ENCODE measurements at regions of chr16 and their contacts with region 1.

Region 1: DNA sequence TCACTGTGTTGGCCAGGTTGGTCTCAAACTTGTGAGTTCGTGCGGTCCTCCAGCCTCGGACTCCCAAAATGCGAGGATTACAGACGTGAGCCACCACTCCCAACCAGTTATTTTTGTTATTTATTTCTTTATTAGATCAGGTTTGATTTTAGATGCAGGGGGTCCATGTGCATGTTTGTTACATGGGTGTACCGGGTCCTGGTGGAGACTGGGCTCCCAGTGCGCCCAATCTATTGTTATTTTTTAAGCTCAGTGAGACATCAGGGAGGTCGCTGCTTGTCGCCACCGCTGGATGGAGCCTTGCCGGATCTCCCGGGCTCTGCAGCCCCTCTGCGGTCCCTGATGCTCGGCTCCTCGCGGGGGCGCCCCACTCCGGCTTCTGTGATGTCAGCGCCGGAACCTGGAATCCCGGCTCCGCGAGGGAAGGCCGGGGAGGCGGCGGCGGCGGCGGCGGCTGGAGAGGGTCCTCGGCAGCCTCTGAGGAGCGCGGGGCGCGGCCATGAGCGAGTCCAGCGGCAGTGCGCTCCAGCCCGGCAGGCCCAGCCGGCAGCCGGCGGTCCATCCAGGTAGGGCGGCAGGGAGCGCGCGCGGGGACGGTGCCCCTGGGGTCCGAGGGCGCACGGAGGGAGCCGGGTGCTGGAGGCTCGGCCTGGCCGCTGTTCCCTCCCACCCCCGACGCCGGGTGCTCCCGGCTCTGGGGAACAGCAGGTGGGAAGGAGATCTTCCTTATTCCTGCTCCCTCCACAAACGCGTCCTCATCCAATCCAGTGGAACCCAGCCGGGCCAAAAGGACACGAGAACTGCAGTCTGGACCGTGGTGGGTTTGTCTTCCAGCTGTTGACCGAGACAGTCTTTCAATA is at the start of gene TMC7:
- DNase-seq: peak; percentile 87
- ATAC-seq: peak; percentile 91
- H3K4me3 ChIP-seq: peak within 1 kb of the TSS; percentile 78
- H3K27ac ChIP-seq: peak within 1 kb of the TSS; percentile 94
- H3K4me1 ChIP-seq: peaks cover 19% of the 10 kb centered on the region
- H3K27me3 ChIP-seq: no peaks in the 10 kb centered on the region
- CTCF ChIP-seq: peak; percentile 85
- total RNA-seq, gene TMC7: 5.3 and 6.9 TPM in 2 replicates

Region 2: GRCh38 chr16:18999045-18999393 is 15.2 kb after region 1 on chr16:
- CTCF ChIA-PET with region 1: interaction called, 10 read pairs
- POLR2A ChIA-PET with region 1: interaction called, 5 read pairs
- intact Hi-C with region 1: loop called (anchors 1 kb)
- DNase-seq: no peak
- ATAC-seq: no peak
- H3K4me3 ChIP-seq: no peak overlapping the region
- H3K27ac ChIP-seq: peak overlapping the region; percentile 100
- H3K4me1 ChIP-seq: peaks cover 53% of the 10 kb centered on the region
- H3K27me3 ChIP-seq: no peaks in the 10 kb centered on the region
- CTCF ChIP-seq: no peak

Region 3: DNA sequence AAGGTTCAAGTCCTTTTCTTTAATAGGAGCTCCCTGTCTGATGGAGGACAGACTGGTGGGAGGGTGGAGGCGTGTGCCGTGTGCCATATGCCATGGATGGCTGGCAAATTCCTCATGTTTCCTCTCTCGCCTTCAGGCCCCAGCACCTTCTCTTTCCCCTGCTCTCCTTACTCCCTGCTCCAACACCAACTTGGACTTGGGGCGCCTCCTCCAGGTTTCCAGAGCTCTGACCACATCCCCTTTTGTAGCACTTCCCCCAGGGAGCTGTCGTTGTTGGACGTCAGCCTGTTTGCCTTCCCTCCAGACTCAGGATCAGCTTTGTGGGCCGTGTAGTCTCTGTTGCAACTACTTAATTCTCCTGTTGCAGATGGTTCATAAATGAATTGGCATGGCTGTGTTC is 30.7 kb after region 1 on chr16:
- CTCF ChIA-PET with region 1: interaction called, 7 read pairs
- POLR2A ChIA-PET with region 1: interaction called, 3 read pairs
- intact Hi-C with region 1: loop called (anchors 2 kb)
- DNase-seq: no peak
- ATAC-seq: no peak
- H3K4me3 ChIP-seq: no peak overlapping the region
- H3K27ac ChIP-seq: no peak overlapping the region
- H3K4me1 ChIP-seq: no peaks in the 10 kb centered on the region
- H3K27me3 ChIP-seq: no peaks in the 10 kb centered on the region
- CTCF ChIP-seq: 0 out of 2 replicates have a peak, but pooled peaks have one; percentile 20

Region 4: DNA sequence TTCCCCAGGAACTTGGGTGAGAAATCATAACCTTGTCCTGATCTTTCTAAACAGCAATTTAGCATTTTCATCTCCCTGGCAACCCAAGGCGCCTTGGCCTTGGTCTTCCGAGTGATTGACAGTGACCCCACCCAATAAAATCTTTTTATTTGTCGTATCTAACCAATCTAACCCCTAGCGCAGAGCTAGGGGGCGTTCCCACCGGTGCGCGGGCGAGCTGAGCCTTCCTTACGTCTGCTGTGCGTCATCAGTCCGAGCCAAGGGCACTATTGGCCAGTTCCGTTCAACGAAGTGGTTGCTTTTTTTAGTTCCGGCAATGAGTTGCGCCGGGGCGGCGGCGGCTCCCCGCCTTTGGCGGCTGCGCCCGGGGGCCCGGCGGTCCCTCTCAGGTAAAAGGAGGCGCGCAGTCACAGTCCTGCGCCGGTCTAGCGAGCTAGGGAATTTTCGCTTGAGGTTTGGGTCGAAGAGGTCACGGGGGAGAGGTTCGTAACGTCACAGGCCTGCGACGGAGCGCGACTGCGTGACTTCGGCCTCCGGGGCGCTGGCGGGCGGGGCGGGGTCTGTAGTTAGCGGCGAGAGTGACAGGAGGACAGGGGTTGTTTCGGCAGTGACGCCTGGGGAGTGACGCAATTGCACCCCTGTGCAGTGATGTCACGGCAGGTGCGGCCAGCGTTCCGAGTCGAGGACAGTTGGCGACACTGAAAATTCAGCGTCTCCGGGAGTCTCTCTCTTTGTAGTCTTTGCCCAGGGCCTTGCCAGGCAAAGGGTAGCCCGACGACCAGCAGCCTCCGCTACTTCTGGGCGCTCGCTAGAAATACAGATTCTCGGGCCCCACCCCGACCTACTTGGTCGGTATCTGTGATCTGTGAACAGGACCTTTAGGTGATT is 83.8 kb after region 1 on chr16 and contains the start of gene COQ7:
- CTCF ChIA-PET with region 1: no interaction called
- POLR2A ChIA-PET with region 1: interaction called, 5 read pairs
- intact Hi-C with region 1: loop called (anchors 1 kb)
- DNase-seq: peak; percentile 98
- ATAC-seq: peak; percentile 89
- H3K4me3 ChIP-seq: peak within 1 kb of the TSS; percentile 95
- H3K27ac ChIP-seq: peak within 1 kb of the TSS; percentile 98
- H3K4me1 ChIP-seq: peaks cover 6% of the 10 kb centered on the region; the same call in 1 of the 2 replicates
- H3K27me3 ChIP-seq: no peaks in the 10 kb centered on the region
- CTCF ChIP-seq: no peak
- total RNA-seq, gene COQ7: 12.2 and 25.0 TPM in 2 replicates